Common myeloid progenitor, CD34-positive (primary cell): ENCODE measurements at regions of chr2 and their contacts with region 1.

Region 1: DNA sequence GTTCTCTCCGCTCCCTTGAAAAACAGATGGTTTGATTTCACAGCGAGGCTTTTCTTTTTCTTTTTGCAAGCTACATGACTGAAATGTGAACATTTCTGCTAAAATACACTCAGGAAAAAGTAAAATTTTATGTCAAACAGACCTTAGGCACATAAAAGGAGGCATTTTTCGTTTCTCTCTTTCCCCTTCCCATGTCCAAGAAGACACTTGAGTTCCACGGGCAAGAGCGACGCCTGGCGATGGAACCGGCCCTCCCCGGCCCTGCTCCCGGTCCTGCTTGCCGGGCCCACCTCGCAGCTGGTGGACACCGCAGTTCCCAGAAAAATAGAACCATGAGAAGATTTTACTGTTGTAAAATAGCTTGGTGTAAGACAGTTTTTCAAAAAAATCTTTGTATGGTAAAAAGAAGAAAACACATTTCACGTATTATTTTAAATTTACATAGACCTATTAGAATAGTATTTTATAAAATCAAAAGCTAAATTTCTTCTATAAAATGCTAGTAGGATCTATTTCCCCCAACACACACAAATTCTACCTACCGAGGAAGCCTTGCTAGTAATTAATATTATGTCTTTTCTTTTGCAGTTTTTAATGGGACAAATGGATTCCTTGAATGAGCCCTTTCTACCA is 2.3 kb upstream of the ALKAL2 start:
- DNase-seq: peak; percentile 71 to 77 (median 75)
- H3K4me3 ChIP-seq: peak overlapping the region; percentile 3 to 83 (median 61)
- H3K27ac ChIP-seq: no peak overlapping the region
- H3K4me1 ChIP-seq: peaks cover 0 to 29% (median 23%) of the 10 kb centered on the region in 4 experiments
- H3K27me3 ChIP-seq: peaks cover 17 to 52% (median 29%) of the 10 kb centered on the region in 5 experiments

Region 2: DNA sequence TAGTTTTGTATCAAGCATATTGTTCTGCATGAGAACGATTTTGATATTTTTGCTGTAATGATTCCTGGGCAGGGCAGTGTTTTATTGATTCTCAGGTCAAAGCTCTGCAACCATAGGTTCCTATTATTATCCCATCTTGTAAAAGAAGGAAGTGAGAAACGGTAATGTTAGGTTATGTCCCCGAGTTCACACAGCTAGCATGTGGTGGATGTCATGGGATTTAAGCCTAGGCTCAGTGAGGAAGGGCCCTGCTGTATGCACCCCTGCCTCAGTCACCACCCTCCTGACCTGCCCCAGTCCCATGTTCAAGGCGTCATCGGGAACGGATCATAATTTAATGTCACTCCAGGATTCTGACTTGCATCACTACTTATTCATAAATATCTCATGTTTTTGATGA is 14.7 kb before region 1 on chr2:
- CTCF ChIA-PET with region 1: interaction called, 12 read pairs
- POLR2A ChIA-PET with region 1: no interaction called
- DNase-seq: no peak
- H3K4me3 ChIP-seq: no peak overlapping the region
- H3K27ac ChIP-seq: no peak overlapping the region
- H3K4me1 ChIP-seq: no peaks in the 10 kb centered on the region
- H3K27me3 ChIP-seq: no peaks in the 10 kb centered on the region